HepG2 (cell line): ENCODE measurements at regions of chr4 and their contacts with region 1.

Region 1: DNA sequence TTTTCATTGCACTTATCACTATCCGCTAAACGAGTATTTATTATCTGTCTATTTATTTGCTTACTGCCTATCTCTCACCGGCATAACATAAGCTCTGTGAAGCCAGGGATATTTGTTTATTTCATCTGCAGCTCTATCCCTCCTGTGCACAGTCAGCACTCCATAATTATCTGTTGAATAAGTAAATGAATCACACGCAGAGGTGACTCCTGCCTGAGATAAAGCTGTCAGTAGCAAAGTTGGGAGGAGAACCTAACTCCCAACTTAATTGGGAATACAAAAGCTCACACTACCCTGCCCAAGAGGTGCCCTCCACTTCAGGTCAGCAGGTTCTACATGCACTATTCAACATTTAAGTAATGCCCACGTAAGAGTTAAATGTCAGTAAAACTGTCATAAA is 85.7 kb downstream of the CORIN start:
- DNase-seq: no peak
- ATAC-seq: no peak
- H3K4me3 ChIP-seq: no peak overlapping the region
- H3K27ac ChIP-seq: no peak overlapping the region
- H3K4me1 ChIP-seq: peaks cover 24% of the 10 kb centered on the region
- H3K27me3 ChIP-seq: no peaks in the 10 kb centered on the region
- CTCF ChIP-seq: no peak
- EP300 ChIP-seq: no peak
- POLR2A ChIP-seq: no peak
- RAD21 ChIP-seq: no peak

Region 2: GRCh38 chr4:47733302-47734175 is 18.7 kb before region 1 on chr4:
- CTCF ChIA-PET with region 1: no interaction called
- POLR2A ChIA-PET with region 1: no interaction called
- in situ Hi-C with region 1: no loop called
- intact Hi-C with region 1: loop called (anchors 1 kb)
- DNase-seq: peak; percentile 86
- ATAC-seq: peak; percentile 92
- H3K4me3 ChIP-seq: no peak overlapping the region; a peak in 1 of 6 replicates
- H3K27ac ChIP-seq: peak overlapping the region; percentile 31
- H3K4me1 ChIP-seq: peaks cover 37% of the 10 kb centered on the region
- H3K27me3 ChIP-seq: no peaks in the 10 kb centered on the region; a peak in 1 of 5 replicates
- CTCF ChIP-seq: no peak
- EP300 ChIP-seq: peak in 1 of 2 experiments; percentile 73; a peak in 2 of 4 replicates
- POLR2A ChIP-seq: no peak
- RAD21 ChIP-seq: no peak

Region 3: DNA sequence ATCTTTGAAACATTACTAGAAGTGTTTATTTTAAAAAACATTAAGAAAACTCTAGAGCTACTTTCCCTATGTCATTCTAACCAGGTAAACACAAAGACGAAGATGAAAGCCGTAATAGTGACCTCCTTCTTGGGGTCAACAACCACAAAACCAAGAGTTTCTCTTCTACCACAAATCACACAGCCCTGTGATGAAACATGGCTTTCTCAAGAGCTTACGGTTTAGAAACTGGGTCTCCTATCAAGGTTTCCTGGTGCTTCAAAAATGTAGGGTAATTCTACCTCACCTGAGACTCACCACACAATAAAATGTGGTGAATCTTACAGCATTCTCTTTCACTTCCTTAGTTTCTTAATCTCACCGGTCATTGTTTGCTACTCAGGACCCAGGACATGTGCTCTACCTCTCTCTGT is 34.8 kb after region 1 on chr4:
- CTCF ChIA-PET with region 1: no interaction called
- POLR2A ChIA-PET with region 1: no interaction called
- in situ Hi-C with region 1: no loop called
- intact Hi-C with region 1: loop called (anchors 5 kb)
- DNase-seq: peak; percentile 67
- ATAC-seq: peak; percentile 73
- H3K4me3 ChIP-seq: no peak overlapping the region
- H3K27ac ChIP-seq: peak overlapping the region; percentile 48
- H3K4me1 ChIP-seq: peaks cover 30% of the 10 kb centered on the region
- H3K27me3 ChIP-seq: no peaks in the 10 kb centered on the region; a peak in 1 of 5 replicates
- CTCF ChIP-seq: no peak
- EP300 ChIP-seq: peak in 1 of 2 experiments; percentile 83; a peak in 2 of 4 replicates
- POLR2A ChIP-seq: no peak
- RAD21 ChIP-seq: no peak

Region 4: GRCh38 chr4:48370260-48371134 is 618.3 kb after region 1 on chr4:
- CTCF ChIA-PET with region 1: no interaction called
- POLR2A ChIA-PET with region 1: no interaction called
- in situ Hi-C with region 1: no loop called
- intact Hi-C with region 1: no loop called
- DNase-seq: no peak
- ATAC-seq: no peak
- H3K4me3 ChIP-seq: no peak overlapping the region
- H3K27ac ChIP-seq: no peak overlapping the region
- H3K4me1 ChIP-seq: peaks cover 13% of the 10 kb centered on the region
- H3K27me3 ChIP-seq: no peaks in the 10 kb centered on the region
- CTCF ChIP-seq: no peak
- EP300 ChIP-seq: no peak
- POLR2A ChIP-seq: no peak
- RAD21 ChIP-seq: no peak